Mammary epithelial cell (primary cell): ENCODE measurements at regions of chr22 and their contacts with region 1.

Region 1: DNA sequence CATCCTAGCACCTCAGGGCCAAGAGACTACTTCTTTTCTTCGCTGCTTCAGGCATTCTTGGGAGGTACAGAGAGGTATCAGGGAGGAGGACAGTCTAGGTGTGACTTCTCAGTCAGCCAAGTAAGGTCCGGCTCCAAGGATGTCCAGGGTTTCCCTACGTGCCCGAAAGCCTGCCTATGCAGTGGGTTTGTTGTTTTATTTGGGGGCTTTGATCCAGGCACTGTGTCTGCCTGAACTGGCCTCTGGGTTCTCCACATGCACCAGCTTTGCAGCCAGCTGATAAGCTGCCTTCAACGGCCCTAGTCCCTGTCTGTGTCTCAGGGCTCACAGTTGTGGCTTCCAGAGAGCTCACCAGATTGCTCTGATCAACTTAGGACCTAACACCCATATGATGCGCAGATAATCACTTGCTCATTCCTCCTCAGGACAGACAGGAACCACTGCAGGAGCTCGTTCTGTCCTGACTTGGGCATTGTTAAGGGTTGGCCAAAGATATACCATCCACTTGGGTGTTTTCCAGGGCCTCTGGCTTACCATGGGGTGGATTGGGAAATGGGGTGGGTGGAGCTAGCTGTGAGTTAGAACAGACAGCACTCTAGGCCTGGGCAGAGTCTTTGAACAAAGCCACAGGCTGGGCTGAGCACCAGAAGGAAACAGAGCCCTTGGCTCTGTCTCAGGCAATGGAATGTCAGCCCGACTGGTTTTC is 45.5 kb upstream of the CRYBB3 start:
- DNase-seq: peak; percentile 92
- H3K4me3 ChIP-seq: no peak overlapping the region
- H3K27ac ChIP-seq: peak overlapping the region; percentile 23
- H3K4me1 ChIP-seq: peaks cover 20% of the 10 kb centered on the region
- H3K27me3 ChIP-seq: no peaks in the 10 kb centered on the region
- CTCF ChIP-seq: no peak

Region 2: DNA sequence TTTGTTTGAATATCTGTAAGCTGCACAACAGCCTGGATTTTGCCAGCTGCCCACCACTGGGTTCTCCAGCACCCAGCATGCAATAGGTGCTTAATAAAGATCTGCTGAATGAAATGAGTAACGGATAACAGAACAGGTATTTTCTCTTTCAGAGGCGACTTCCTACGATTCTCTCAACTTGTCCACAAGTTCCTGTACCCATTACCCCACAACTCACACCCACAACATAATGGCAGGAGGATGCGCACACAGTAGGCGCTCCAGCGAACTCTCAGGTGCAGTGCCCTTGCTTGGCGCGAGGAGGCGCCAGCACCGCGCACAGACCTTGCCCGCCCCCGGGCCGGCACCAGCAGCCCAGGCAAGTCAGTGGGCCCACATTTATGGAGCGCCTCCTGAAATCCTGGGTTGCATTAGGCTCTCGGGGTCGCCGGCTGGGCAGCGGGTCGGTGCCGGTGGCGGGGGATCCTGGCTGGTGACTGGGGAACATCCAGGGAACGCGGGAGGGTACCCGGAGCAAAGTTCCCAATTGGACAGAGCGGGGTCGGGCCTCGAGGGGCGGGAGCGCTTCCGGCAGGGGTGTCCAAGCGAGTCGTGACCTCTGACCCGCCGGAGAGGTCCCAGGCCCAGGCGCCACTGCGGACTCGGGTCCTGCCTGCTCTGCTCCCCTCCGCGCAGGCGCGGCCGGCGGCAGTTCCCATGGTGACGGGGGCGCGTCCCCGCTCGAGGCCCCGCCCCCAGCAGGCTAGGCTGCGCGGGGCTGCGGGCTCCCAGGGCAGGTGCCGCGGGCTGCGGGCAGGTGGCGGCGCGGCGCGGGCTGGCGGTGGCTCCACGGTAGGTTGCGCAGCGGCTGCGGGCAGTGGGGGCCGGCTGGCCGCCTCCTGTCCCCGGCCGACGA is 201.9 kb before region 1 on chr22 and contains the start of gene KIAA1671:
- CTCF ChIA-PET with region 1: no interaction called
- dilution Hi-C with region 1: no loop called
- in situ Hi-C with region 1: no loop called
- intact Hi-C with region 1: no loop called
- DNase-seq: peak; percentile 78
- H3K4me3 ChIP-seq: peak within 1 kb of the TSS; percentile 73 to 93 (median 86)
- H3K27ac ChIP-seq: peak within 1 kb of the TSS; percentile 92
- H3K4me1 ChIP-seq: peaks cover 41% of the 10 kb centered on the region
- H3K27me3 ChIP-seq: no peaks in the 10 kb centered on the region
- CTCF ChIP-seq: peak; percentile 97 to 99
- total RNA-seq, gene KIAA1671: 38.4 to 48.8 TPM

Region 3: DNA sequence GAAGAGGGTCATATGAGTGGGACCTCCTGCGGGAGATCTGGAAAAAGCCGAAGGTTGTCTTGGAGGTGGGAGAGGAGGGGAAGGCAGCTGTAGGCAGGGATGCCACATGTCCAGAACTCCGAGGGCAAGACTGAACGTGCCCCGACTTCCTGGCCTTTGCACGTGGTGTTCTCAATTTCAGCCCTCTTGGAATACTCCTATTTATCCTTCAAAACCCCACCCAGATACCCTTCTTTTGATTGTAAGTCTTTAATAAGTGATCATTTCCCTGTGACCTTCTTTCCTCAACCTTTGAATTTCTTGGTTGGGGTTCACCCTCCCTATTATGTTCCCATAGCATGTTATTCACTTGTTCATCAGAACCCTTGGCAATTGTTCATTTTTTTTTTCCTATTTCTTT is 49.7 kb before region 1 on chr22:
- CTCF ChIA-PET with region 1: no interaction called
- dilution Hi-C with region 1: no loop called
- in situ Hi-C with region 1: no loop called
- intact Hi-C with region 1: no loop called
- DNase-seq: no peak
- H3K4me3 ChIP-seq: no peak overlapping the region
- H3K27ac ChIP-seq: no peak overlapping the region
- H3K4me1 ChIP-seq: peaks cover 5% of the 10 kb centered on the region
- H3K27me3 ChIP-seq: no peaks in the 10 kb centered on the region
- CTCF ChIP-seq: no peak

Region 4: GRCh38 chr22:25202290-25202921 is 48.3 kb after region 1 on chr22:
- CTCF ChIA-PET with region 1: no interaction called
- dilution Hi-C with region 1: loop called (anchors 5 kb)
- in situ Hi-C with region 1: no loop called
- intact Hi-C with region 1: no loop called
- DNase-seq: peak; percentile 33
- H3K4me3 ChIP-seq: no peak overlapping the region
- H3K27ac ChIP-seq: no peak overlapping the region
- H3K4me1 ChIP-seq: no peaks in the 10 kb centered on the region
- H3K27me3 ChIP-seq: no peaks in the 10 kb centered on the region
- CTCF ChIP-seq: peak; percentile 84 to 92